H1 (cell line): ENCODE measurements at regions of chr12 and their contacts with region 1.

Region 1: GRCh38 chr12:68317047-68317667 is 15.0 kb downstream of the MDM1 start:
- DNase-seq: no peak
- H3K4me3 ChIP-seq: no peak overlapping the region
- H3K27ac ChIP-seq: no peak overlapping the region
- H3K4me1 ChIP-seq: no peaks in the 10 kb centered on the region
- H3K27me3 ChIP-seq: no peaks in the 10 kb centered on the region
- CTCF ChIP-seq: peak in 2 of 3 experiments; percentile 5 to 34; a peak in 2 of 4 replicates
- EP300 ChIP-seq: no peak
- POLR2A ChIP-seq: no peak
- RAD21 ChIP-seq: peak; percentile 46 to 56

Region 2: GRCh38 chr12:67977668-67978067 is 339.5 kb before region 1 on chr12:
- CTCF ChIA-PET with region 1: no interaction called
- POLR2A ChIA-PET with region 1: no interaction called
- DNase-seq: no peak
- H3K4me3 ChIP-seq: no peak overlapping the region
- H3K27ac ChIP-seq: no peak overlapping the region
- H3K4me1 ChIP-seq: peaks cover 0 to 3% (median 1%) of the 10 kb centered on the region in 4 experiments; a peak in 2 of 7 replicates
- H3K27me3 ChIP-seq: no peaks in the 10 kb centered on the region
- CTCF ChIP-seq: peak in 2 of 3 experiments; percentile 4 to 15; a peak in 2 of 4 replicates
- EP300 ChIP-seq: no peak
- POLR2A ChIP-seq: no peak
- RAD21 ChIP-seq: peak; percentile 37 to 40

Region 3: DNA sequence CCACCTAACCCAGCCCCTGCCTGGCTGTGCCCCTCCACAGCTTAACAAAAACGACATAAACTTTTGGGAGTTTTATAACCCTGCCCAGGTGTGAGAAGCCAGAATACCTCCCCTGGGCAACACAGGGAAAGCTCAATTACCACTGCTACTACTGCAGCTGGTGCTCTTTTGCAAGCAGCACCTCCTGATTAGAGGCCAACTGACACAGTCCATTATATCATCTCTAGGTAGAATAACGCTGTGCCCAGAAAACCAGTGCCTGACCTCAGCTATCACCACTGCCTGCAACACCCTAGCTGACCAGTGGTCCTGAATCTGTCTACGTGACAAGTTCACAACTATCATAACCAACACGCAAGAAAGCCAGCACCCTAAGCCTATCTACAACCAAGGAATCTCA is 19.2 kb before region 1 on chr12:
- CTCF ChIA-PET with region 1: interaction called, 15 read pairs
- POLR2A ChIA-PET with region 1: no interaction called
- DNase-seq: no peak
- H3K4me3 ChIP-seq: no peak overlapping the region
- H3K27ac ChIP-seq: no peak overlapping the region
- H3K4me1 ChIP-seq: no peaks in the 10 kb centered on the region
- H3K27me3 ChIP-seq: peaks cover 0 to 1% (median 0%) of the 10 kb centered on the region in 4 experiments; a peak in 1 of 7 replicates
- CTCF ChIP-seq: no peak
- EP300 ChIP-seq: no peak
- POLR2A ChIP-seq: no peak
- RAD21 ChIP-seq: no peak